ENCODE measurements at regions of chr1 and their contacts with region 1.

Region 1: DNA sequence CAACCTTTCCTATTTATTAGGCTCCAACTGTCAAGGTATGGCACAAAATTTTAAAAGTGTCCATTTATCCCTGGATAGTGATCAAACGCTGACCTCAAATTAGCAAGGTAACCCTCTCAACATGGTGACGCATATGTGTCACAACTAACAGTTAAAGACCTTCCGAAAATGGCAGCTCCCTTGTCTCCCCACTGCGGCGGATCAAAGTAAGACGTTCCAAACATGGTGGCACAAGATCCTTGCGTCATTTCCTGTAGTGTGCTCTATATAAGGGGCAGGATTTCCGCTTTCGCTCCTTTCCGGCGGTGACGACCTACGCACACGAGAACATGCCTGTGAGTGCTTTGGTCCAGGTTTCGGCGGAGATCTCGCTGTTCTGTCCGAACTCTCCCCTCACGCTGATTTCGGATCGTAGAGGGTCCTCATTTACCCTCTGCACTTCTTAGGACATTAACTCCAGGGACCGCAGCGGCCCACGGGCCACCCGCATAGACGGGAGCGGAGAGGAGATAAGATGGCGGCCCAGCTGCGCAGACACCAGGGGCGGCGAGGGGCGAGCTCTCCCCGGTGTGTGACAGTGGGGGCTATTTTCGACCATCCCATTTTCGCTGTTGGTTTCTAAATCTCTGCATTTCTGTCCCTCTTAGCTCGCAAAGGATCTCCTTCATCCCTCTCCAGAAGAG is at the start of gene RPS27:
- DNase-seq: peak; percentile 93 to 97 (median 95)
- H3K4me3 ChIP-seq: peak within 1 kb of the TSS; percentile 87 to 92
- H3K4me3 Mint-ChIP-seq: peak within 1 kb of the TSS; percentile 94 to 99 (median 98)
- H3K27ac ChIP-seq: peak within 1 kb of the TSS; percentile 93
- H3K27ac Mint-ChIP-seq: peak within 1 kb of the TSS; percentile 93 to 100 (median 100)
- H3K4me1 ChIP-seq: peaks cover 37% of the 10 kb centered on the region
- H3K4me1 Mint-ChIP-seq: peaks cover 22 to 42% (median 34%) of the 10 kb centered on the region in 4 donors
- H3K27me3 ChIP-seq: no peaks in the 10 kb centered on the region
- H3K27me3 Mint-ChIP-seq: peaks cover 2 to 3% of the 10 kb centered on the region in 2 donors
- total RNA-seq, gene RPS27: 6,785 to 7,292 TPM

Region 2: GRCh38 chr1:153633716-153634665 is 356.6 kb before region 1 on chr1 and contains the start of gene CHTOP:
- CTCF ChIA-PET with region 1: no interaction called
- POLR2A ChIA-PET with region 1: interaction called, 26 read pairs
- intact Hi-C with region 1: loop called (anchors 2 kb)
- DNase-seq: peak; percentile 96 to 98 (median 97)
- H3K4me3 ChIP-seq: peak within 1 kb of the TSS; percentile 99
- H3K4me3 Mint-ChIP-seq: peak within 1 kb of the TSS; percentile 94 to 100 (median 98)
- H3K27ac ChIP-seq: peak within 1 kb of the TSS; percentile 100
- H3K27ac Mint-ChIP-seq: peak within 1 kb of the TSS; percentile 98 to 100 (median 100)
- H3K4me1 ChIP-seq: peaks cover 35% of the 10 kb centered on the region
- H3K4me1 Mint-ChIP-seq: peaks cover 26 to 51% (median 39%) of the 10 kb centered on the region in 4 donors
- H3K27me3 ChIP-seq: no peaks in the 10 kb centered on the region
- H3K27me3 Mint-ChIP-seq: no peaks in the 10 kb centered on the region
- total RNA-seq, gene CHTOP: 144 to 149 TPM

Region 3: DNA sequence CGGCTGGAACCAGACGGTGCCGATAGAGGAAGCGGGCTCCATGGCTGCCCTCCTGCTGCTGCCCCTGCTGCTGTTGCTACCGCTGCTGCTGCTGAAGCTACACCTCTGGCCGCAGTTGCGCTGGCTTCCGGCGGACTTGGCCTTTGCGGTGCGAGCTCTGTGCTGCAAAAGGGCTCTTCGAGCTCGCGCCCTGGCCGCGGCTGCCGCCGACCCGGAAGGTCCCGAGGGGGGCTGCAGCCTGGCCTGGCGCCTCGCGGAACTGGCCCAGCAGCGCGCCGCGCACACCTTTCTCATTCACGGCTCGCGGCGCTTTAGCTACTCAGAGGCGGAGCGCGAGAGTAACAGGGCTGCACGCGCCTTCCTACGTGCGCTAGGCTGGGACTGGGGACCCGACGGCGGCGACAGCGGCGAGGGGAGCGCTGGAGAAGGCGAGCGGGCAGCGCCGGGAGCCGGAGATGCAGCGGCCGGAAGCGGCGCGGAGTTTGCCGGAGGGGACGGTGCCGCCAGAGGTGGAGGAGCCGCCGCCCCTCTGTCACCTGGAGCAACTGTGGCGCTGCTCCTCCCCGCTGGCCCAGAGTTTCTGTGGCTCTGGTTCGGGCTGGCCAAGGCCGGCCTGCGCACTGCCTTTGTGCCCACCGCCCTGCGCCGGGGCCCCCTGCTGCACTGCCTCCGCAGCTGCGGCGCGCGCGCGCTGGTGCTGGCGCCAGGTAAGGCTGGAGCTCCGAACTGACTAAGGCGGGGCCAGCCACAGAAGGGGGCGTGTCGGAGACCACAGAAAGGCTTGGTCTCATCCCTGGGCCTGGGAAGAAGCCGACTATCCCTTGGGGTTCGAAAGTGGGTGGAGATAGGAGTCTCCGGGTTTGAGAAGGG is 214.9 kb before region 1 on chr1:
- CTCF ChIA-PET with region 1: interaction called, 7 read pairs
- POLR2A ChIA-PET with region 1: interaction called, 26 read pairs
- intact Hi-C with region 1: no loop called
- DNase-seq: peak; percentile 53 to 69 (median 57)
- H3K4me3 ChIP-seq: peak overlapping the region; percentile 47 to 71
- H3K4me3 Mint-ChIP-seq: peak overlapping the region; percentile 81 to 88 (median 84)
- H3K27ac ChIP-seq: peak overlapping the region; percentile 47
- H3K27ac Mint-ChIP-seq: peak overlapping the region; percentile 22 to 90 (median 68)
- H3K4me1 ChIP-seq: peaks cover 20% of the 10 kb centered on the region
- H3K4me1 Mint-ChIP-seq: peaks cover 12 to 31% (median 15%) of the 10 kb centered on the region in 4 donors
- H3K27me3 ChIP-seq: no peaks in the 10 kb centered on the region
- H3K27me3 Mint-ChIP-seq: no peaks in the 10 kb centered on the region

Region 4: GRCh38 chr1:153816283-153816889 is 174.2 kb before region 1 on chr1:
- CTCF ChIA-PET with region 1: interaction called, 12 read pairs
- POLR2A ChIA-PET with region 1: interaction called, 5 read pairs
- intact Hi-C with region 1: loop called (anchors 1 kb)
- DNase-seq: no peak
- H3K4me3 ChIP-seq: no peak overlapping the region
- H3K4me3 Mint-ChIP-seq: no peak overlapping the region
- H3K27ac ChIP-seq: no peak overlapping the region
- H3K27ac Mint-ChIP-seq: peak overlapping the region in 2 of 7 donors; percentile 48 to 73
- H3K4me1 ChIP-seq: no peaks in the 10 kb centered on the region
- H3K4me1 Mint-ChIP-seq: peaks cover 0 to 4% (median under 1%) of the 10 kb centered on the region in 4 donors
- H3K27me3 ChIP-seq: no peaks in the 10 kb centered on the region
- H3K27me3 Mint-ChIP-seq: no peaks in the 10 kb centered on the region

Region 5: GRCh38 chr1:153958111-153958960 is 32.3 kb before region 1 on chr1 and contains the start of gene CRTC2:
- CTCF ChIA-PET with region 1: interaction called, 70 read pairs
- POLR2A ChIA-PET with region 1: interaction called, 38 read pairs
- intact Hi-C with region 1: loop called (anchors 2 kb)
- DNase-seq: peak; percentile 95 to 99 (median 97)
- H3K4me3 ChIP-seq: peak within 1 kb of the TSS; percentile 80 to 99
- H3K4me3 Mint-ChIP-seq: peak within 1 kb of the TSS; percentile 97 to 99 (median 99)
- H3K27ac ChIP-seq: peak within 1 kb of the TSS; percentile 90
- H3K27ac Mint-ChIP-seq: peak within 1 kb of the TSS; percentile 88 to 99 (median 97)
- H3K4me1 ChIP-seq: peaks cover 61% of the 10 kb centered on the region
- H3K4me1 Mint-ChIP-seq: peaks cover 42 to 75% (median 57%) of the 10 kb centered on the region in 4 donors
- H3K27me3 ChIP-seq: no peaks in the 10 kb centered on the region
- H3K27me3 Mint-ChIP-seq: no peaks in the 10 kb centered on the region
- total RNA-seq, gene CRTC2: 112 to 113 TPM

Region 6: GRCh38 chr1:154104433-154105082 is 113.9 kb after region 1 on chr1:
- CTCF ChIA-PET with region 1: no interaction called
- POLR2A ChIA-PET with region 1: no interaction called
- intact Hi-C with region 1: no loop called
- DNase-seq: no peak
- H3K4me3 ChIP-seq: no peak overlapping the region
- H3K4me3 Mint-ChIP-seq: no peak overlapping the region
- H3K27ac ChIP-seq: no peak overlapping the region
- H3K27ac Mint-ChIP-seq: peak overlapping the region in 1 of 7 donors; percentile 72
- H3K4me1 ChIP-seq: no peaks in the 10 kb centered on the region
- H3K4me1 Mint-ChIP-seq: no peaks in the 10 kb centered on the region
- H3K27me3 ChIP-seq: no peaks in the 10 kb centered on the region
- H3K27me3 Mint-ChIP-seq: peaks cover 0 to 2% of the 10 kb centered on the region in 2 donors

Region 7: DNA sequence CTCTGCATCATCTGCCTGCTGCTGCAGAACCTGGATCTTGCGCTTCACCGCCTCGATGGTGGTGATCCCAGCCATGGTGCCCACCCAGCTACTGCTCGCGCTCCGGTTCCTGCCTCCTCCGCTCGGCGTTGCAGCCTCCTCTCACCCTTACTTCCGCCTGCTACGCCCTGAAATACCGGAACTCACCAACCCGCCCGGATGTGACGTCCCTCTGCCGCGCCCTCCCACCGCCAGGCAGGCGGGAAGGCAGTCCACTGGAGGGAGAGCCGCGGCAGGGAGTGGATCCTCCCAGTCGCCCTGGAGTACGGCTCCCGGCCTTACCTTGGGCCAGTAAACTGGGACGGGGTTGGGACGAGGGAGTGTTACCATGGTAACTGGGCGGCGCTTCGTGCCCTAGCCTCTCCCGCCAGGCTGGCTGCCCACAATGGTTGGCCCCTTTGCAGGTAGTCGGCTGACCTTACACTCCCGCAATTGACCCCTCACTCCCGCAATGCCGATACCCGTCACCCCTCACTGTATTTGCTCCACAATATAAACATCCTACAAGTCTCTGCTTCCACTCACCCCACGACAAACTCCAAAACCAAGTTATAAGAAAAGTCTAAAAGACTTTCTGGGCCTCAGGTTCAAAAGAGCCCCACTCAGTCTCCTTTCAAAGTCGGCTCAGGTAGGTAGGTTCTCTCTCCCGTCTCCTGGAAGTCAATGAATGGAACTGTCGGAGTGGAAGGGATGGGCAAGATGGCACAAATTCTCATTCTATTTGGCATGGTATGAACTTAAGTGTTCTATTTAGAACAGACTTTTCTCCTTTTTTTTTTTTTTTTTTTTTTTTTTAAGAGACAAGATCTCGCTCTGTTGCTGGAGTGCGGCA is 192.7 kb after region 1 on chr1:
- CTCF ChIA-PET with region 1: no interaction called
- POLR2A ChIA-PET with region 1: interaction called, 35 read pairs
- intact Hi-C with region 1: loop called (anchors 2 kb)
- DNase-seq: peak; percentile 91 to 96 (median 92)
- H3K4me3 ChIP-seq: peak overlapping the region; percentile 74 to 90
- H3K4me3 Mint-ChIP-seq: peak overlapping the region; percentile 99 to 100 (median 100)
- H3K27ac ChIP-seq: peak overlapping the region; percentile 93
- H3K27ac Mint-ChIP-seq: peak overlapping the region; percentile 98 to 100 (median 100)
- H3K4me1 ChIP-seq: peaks cover 42% of the 10 kb centered on the region
- H3K4me1 Mint-ChIP-seq: peaks cover 34 to 62% (median 46%) of the 10 kb centered on the region in 4 donors
- H3K27me3 ChIP-seq: no peaks in the 10 kb centered on the region
- H3K27me3 Mint-ChIP-seq: no peaks in the 10 kb centered on the region

Region 8: DNA sequence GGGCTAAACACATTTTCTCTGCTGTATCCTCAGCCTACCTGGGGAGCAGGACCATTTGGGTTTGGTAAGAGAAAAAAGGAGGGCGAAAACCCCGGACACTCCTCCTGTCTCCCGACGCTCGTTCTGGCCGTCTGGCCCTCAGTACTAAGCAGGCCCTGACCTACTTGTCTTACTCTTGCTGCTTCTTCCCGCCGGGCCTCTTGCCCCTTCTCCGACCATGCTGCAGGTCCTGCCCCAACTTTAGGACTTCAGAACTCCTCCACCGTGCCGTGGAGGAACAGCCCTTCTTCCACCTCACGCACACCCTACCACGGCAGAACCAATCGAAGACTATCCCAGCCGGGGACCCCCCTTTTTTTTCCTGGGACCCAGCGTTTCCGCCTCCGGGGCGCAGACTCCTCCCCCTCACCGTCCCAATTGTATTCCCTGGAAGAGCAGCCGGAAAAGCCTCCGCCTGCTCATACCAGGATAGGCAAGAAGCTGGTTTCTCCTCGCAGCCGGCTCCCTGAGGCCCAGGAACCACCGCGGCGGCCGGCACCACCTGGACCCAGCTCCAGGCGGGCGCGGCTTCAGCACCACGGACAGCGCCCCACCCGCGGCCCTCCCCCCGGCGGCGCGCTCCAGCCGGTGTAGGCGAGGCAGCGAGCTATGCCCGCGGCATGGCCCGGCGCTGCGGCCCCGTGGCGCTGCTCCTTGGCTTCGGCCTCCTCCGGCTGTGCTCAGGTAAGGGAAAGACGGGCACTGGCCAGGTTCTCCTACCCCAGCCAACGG is 577.0 kb after region 1 on chr1 and contains the start of gene CHRNB2:
- CTCF ChIA-PET with region 1: no interaction called
- POLR2A ChIA-PET with region 1: no interaction called
- intact Hi-C with region 1: no loop called
- DNase-seq: peak; percentile 53 to 76 (median 70)
- H3K4me3 ChIP-seq: no peak within 1 kb of the TSS
- H3K4me3 Mint-ChIP-seq: peak within 1 kb of the TSS in 4 of 8 donors; percentile 8 to 52 (median 30)
- H3K27ac ChIP-seq: no peak within 1 kb of the TSS
- H3K27ac Mint-ChIP-seq: peak within 1 kb of the TSS in 2 of 7 donors; percentile 35 to 54
- H3K4me1 ChIP-seq: peaks cover 6% of the 10 kb centered on the region
- H3K4me1 Mint-ChIP-seq: peaks cover 0 to 10% (median 3%) of the 10 kb centered on the region in 4 donors
- H3K27me3 ChIP-seq: peaks cover 16% of the 10 kb centered on the region
- H3K27me3 Mint-ChIP-seq: peaks cover 21 to 25% of the 10 kb centered on the region in 2 donors
- total RNA-seq, gene CHRNB2: not detected

Measured in CD4-positive, alpha-beta memory T cell (primary cell).